Motor neuron (in vitro differentiated cells): ENCODE measurements at regions of chr1 and their contacts with region 1.

Region 1: GRCh38 chr1:168603501-168604110 is 27.2 kb downstream of the XCL1 start:
- ATAC-seq: peak; percentile 90 to 99 (median 94)
- H3K4me3 ChIP-seq: no peak overlapping the region
- H3K27ac ChIP-seq: no peak overlapping the region
- H3K4me1 ChIP-seq: peaks cover 3 to 20% of the 10 kb centered on the region in 2 donors

Region 2: DNA sequence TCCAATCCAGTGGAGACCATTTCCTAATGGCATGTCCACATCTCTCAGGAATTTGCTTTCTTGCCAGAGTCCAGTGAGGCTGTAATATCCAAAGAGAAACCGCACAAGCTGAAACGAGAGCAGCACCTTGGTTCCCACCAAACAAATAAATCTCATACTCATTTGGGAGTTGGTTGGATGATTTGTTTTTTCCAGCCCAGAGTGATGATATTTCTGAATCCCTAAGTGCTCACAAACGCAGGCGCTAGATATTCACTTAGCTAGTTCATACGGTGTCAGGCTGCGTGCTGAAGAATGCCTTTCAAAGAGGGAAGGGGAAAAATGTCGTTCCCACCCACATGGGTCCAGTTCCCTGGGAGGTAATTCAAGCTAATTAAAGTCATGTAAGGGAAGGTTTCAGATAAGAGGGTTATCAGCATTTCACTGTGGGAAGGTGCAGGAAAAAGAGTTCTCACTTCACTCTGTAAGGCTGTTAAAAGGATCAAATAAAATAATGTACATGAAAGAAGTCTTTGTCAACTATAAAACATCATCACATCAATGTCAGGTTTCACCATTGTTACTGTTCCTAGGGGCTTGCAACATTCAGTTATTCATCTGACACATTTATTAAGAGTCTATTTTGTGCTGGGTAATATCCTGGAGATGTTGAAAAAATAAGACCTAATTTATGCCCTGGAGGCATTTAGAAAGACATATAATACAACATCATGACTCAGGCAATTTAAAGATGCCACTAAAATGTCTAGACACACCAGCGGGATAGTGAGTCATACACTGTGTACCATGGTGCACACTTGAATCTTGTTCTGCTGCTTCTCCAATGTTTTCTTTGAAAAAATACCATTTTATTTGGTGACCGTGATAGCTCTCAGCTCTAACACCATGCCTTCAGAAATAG is 106.0 kb after region 1 on chr1:
- in situ Hi-C with region 1: no loop called
- ATAC-seq: peak; percentile 79 to 94 (median 88)
- H3K4me3 ChIP-seq: no peak overlapping the region
- H3K27ac ChIP-seq: no peak overlapping the region
- H3K4me1 ChIP-seq: peaks cover 10 to 11% of the 10 kb centered on the region in 2 donors

Region 3: DNA sequence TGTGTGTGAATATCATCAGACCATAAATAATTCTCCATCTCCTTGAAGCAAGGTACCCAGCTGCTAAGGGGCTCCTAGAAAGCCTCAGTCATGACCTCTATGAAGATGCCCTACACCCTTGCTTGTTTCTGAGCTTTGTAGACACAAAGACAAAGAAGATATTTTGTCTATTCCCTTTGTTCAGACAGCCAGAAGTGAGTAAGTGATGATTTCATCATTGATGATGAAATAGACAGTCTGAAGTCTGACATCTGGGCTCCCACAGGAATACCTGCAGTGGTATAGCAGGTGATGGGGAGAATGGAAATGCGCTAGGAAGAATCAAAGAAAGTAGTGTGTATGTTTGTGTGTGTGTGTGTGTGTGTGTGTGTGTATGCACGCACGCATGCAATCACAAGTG is 207.6 kb after region 1 on chr1:
- in situ Hi-C with region 1: no loop called
- ATAC-seq: peak in 5 of 8 experiments; percentile 67 to 95 (median 83)
- H3K4me3 ChIP-seq: no peak overlapping the region
- H3K27ac ChIP-seq: peak overlapping the region in 1 of 2 donors; percentile 30
- H3K4me1 ChIP-seq: peaks cover 0 to 8% of the 10 kb centered on the region in 2 donors

Region 4: DNA sequence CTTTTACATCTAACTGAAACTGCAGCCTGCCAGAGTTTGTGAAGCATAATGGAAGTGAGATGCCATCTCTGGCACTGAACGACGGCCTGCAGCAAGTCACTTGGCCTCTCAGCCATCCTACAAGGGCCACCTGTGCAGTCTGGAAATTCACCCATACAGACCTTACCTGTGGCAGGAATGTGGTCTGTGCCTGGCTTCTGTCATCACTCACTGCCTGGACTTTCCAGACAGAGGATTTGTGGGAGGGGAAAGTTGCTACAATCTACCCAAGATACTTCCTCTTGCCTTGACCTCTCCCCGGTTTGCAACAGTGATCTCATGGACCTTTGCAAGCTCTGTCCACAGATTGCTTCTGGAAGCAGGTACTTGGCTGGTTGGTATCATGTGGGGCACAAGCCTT is 444.4 kb after region 1 on chr1:
- in situ Hi-C with region 1: no loop called
- ATAC-seq: no peak
- H3K4me3 ChIP-seq: no peak overlapping the region
- H3K27ac ChIP-seq: no peak overlapping the region
- H3K4me1 ChIP-seq: peaks cover 11 to 12% of the 10 kb centered on the region in 2 donors

Region 5: DNA sequence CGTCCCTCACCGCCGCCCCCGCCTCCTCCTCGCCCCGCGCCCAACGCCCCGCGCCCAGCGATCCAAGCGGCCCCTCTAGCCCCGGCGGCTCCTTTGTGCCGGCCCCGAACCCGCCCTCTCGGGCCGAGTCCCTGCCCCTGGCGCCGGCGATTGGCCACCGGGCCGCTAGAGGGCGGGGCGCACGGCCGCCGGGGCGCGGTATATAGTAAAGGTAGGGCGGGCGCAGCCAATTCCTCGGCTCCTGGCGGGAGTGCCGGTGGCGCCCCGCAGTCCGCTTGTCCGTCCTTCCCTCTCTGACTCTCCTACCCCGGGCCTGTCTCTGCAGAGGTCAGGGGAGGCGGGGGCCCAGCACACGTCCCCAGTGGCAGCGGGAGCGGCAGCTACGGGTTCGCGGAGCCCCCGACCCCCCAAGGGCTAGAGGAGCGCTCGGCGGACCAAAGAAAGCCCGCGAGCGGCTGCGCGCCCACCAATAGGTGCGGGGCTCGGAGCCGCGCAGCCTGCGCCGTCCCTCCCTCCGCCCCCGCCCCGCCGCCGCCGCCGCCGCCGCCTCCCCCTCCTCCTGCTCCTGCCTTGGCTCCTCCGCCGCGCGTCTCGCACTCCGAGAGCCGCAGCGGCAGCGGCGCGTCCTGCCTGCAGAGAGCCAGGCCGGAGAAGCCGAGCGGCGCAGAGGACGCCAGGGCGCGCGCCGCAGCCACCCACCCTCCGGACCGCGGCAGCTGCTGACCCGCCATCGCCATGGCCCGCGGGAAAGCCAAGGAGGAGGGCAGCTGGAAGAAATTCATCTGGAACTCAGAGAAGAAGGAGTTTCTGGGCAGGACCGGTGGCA is 502.7 kb after region 1 on chr1 and contains the start of gene ATP1B1:
- in situ Hi-C with region 1: loop called in 6 of 9 experiments (anchors 10 to 25 kb)
- ATAC-seq: peak; percentile 78 to 89 (median 83)
- H3K4me3 ChIP-seq: peak within 1 kb of the TSS; percentile 63 to 99 (median 96)
- H3K27ac ChIP-seq: peak within 1 kb of the TSS; percentile 84 to 94
- H3K4me1 ChIP-seq: peaks cover 29 to 41% of the 10 kb centered on the region in 2 donors
- total RNA-seq, gene ATP1B1: 4.6 to 271 (median 153) TPM

Region 6: DNA sequence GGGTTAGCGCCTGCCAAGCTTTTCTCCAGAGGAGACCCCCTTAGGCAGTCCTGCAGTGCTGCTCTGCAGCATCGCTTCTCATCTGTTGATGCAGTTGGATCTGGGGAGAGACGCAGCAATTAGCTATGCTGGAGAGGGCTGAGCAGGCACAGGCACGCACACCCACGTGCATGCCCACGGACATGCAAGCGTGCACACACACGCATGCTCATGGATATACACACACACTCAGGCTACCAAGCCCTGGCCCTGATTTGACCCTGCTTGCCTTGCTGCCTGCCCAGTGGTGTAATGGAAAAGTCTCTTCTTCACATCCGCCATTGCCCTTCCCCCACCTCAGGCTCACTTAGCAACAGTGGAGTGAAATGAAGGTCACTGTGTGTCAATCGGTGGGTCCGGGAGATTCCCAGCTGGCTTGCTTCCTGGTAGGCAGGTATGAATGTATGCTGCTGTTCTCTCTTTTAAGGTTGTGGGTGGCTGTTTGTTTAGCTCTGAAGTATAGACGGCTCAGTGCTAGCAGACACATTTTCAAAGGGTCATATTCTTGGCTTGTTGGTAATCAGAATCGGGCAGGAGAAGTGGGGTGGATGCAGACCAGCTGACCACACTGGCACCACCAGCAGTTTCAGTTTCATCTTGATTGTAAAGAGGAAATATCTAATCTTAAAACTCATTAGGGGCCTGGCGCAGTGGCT is 512.4 kb after region 1 on chr1:
- in situ Hi-C with region 1: loop called in 6 of 9 experiments (anchors 10 to 25 kb)
- ATAC-seq: peak in 5 of 8 experiments; percentile 81 to 94 (median 90)
- H3K4me3 ChIP-seq: peak overlapping the region in 1 of 5 donors; percentile 1
- H3K27ac ChIP-seq: peak overlapping the region; percentile 33 to 34
- H3K4me1 ChIP-seq: peaks cover 18 to 22% of the 10 kb centered on the region in 2 donors

Region 7: DNA sequence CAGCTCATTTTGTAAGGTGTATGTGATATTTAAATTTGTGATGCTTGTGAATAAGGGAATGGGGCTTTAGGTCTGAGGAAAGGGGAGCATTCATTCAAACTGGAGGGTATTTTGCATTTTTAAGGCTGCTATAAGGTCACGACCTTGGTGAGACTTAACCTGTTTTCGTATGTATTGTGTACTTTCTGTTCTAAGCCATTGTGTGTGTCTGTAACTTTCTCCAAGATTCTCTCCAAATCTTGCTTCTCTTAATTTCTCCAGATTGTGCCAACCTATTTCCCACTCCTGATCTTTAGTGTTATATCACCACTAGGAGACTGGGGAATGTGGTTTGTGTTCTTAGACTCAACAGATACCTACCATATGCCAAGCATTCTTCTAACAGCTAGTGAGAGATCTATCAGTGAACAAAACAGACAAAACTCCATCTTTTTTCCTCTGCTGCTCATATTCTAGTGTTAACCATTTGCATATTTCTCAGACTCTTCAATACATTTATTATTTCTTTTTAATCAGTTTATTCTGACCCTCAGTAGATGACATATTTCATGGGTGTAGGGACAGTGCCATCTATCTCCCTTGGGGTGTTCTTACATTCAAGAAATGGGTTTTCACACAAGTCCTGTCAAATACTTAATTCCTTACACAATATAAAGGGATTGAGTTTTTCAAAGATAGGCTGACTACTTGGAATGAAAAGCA is 530.3 kb after region 1 on chr1:
- in situ Hi-C with region 1: loop called in 1 of 9 experiments (anchors 25 kb)
- ATAC-seq: peak in 4 of 8 experiments; percentile 31 to 48 (median 36)
- H3K4me3 ChIP-seq: no peak overlapping the region
- H3K27ac ChIP-seq: no peak overlapping the region
- H3K4me1 ChIP-seq: peaks cover 5 to 8% of the 10 kb centered on the region in 2 donors

Region 8: DNA sequence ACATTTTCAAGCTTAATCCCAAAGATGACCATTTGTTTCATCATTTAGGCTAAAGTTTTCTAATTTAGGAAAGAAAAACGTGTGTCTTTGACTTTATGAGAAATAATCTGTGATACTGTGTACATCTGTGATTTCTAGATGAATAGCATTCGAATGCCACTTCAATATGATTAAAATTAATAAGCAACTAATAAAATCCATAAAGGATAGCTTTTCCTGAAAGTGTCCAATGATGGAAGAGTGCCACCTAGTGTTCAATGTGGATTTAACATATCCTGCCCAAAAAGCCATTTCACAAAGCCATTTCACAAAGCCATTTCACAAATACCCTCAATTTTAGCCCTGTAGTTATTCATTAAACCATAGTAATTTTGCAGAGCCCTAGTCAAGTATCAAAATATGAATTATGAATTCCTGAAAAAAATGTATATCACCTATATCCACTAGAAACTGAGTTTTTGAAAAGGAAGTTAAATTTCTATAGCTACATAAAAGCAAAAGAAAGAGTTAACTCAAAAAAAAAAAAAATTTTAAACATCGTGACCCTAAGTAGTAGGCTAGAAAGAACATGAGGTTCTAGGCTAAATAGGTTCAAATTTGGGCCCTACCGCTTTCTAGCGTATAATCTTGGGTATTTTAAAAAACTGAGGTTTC is 744.9 kb after region 1 on chr1:
- in situ Hi-C with region 1: loop called in 7 of 9 experiments (anchors 10 to 25 kb)
- ATAC-seq: peak in 2 of 8 experiments; percentile 25 to 39
- H3K4me3 ChIP-seq: no peak overlapping the region
- H3K27ac ChIP-seq: no peak overlapping the region
- H3K4me1 ChIP-seq: peaks cover 0 to 5% of the 10 kb centered on the region in 2 donors

Region 9: DNA sequence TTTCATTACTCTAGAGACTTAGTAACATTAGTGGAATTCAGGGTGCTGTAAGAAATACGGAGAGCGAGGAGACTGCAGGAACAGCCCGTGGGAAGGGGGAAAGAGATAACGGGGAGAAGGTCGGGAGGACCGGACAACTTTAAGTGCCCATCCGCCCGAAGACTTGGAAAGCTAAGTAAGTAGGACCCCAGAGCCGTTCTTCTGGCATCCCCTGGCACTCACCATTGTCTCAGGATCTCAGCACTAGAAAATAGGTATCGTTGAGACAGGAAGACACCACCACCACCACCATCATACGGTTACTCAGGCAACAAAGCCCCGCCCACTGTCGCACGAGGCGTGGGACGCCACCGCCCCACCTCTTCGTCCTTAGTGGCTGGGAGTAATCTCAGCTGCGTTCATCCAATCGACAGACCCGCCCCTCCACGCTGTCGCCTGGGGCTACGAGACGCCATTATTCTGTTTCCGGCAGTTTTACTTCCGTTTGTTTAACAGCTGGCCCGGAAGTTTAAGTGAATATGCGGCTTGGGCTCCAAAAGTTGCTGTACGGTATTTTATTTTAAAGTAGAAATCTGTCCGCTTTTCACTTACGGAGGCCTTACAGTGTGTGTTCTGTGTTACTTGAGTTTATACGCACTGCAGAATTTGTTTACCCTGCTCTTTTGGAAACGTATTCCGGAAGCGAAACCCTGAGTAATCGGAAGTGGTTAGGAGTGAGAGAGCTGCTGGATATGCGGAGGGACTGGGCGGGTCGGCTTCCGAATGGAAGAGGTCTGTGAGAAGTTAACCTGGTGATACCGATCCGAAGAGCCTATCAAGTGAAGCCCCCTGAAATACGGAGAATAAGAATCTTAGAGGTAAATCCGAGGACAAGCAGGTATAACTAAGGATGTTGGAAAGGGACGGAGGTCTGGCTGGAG is 764.1 kb after region 1 on chr1 and contains the starts of genes BLZF1 and NME7:
- in situ Hi-C with region 1: loop called in 3 of 9 experiments (anchors 25 kb)
- ATAC-seq: peak; percentile 89 to 99 (median 98)
- H3K4me3 ChIP-seq: peak within 1 kb of the TSS; percentile 55 to 82 (median 73)
- H3K27ac ChIP-seq: peak within 1 kb of the TSS; percentile 84 to 88
- H3K4me1 ChIP-seq: peaks cover 10 to 35% of the 10 kb centered on the region in 2 donors
- total RNA-seq, gene BLZF1: 24.8 to 71.0 (median 39.6) TPM
- total RNA-seq, gene NME7: 14.2 to 111 (median 71.9) TPM